ENCODE measurements at regions of chr3 and their contacts with region 1.

Region 1: GRCh38 chr3:52220380-52221026 is 4.9 kb downstream of the TLR9 start:
- DNase-seq: peak; percentile 96

Region 2: DNA sequence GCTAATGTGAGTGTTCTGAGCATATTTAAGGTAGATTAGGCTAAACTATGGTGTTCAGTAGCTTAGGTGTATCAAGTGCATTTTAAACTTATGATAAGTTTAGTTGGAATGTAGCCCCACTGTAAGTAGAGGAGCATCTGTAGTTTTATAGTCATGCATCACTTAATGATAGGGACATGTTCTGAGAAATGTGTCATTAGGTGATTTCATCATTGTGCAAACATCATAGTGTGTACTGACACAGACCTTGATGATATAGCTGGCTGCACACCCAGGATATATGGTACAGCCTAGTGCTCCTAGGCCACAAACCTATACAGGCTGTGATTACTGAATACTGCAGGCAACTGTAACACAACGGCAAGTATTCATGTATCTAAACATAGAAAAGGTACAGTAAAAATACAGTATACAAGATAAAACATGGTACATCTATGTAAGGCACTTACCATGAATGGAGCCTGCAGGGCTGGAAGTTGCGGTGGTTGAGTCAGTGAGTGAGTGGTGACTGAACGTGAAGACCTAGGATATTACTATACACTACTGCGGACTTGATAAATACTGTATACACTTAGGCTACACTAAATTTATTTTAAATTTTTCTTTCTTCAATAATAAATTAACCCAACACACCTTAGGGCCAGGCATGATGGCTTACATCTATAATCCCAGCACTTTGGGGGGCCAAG is 113.5 kb after region 1 on chr3:
- intact Hi-C with region 1: loop called in 1 of 2 experiments (anchors 5 kb)
- DNase-seq: peak; percentile 30

Region 3: GRCh38 chr3:52346623-52347530 is 126.4 kb after region 1 on chr3:
- intact Hi-C with region 1: loop called (anchors 5 kb)
- DNase-seq: peak; percentile 80

Measured in posterior vena cava (tissue), 2 donors.